ENCODE measurements at regions of chr10 and their contacts with region 1.

Region 1: DNA sequence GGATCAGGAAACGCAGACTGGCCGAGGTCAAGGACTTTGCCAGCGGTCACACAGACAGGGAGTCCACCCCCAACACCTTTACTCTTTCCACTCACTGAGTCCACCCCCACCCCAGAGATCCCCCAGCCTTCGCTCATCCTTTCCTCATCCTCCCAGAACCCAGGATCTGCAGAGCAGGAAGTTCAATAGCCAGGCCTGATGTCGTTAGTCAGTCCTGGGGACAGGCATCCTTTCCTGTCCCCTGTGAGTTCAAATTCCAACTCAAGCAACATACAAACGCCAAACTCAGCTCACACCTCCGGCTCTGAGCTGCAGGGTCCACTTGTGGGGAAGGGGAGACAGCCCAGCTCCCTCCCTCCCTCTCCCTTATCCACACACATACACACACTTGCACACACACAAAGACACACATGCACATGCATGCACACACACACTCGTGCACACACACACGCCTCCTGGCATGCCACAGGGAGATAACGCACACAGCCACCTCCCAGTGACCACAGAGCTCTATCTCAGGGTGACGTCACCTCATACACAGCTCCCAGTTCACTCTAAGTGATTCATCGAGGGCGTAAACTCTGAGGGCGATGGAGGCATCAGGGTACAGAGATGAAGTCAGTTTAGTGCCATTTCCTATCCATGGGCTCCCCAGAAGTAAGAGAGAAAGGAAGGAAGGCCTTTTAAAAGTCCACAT is 23.9 kb downstream of the CALML3 start:
- DNase-seq: peak; percentile 99
- ATAC-seq: peak; percentile 76
- H3K4me3 ChIP-seq: no peak overlapping the region
- H3K27ac ChIP-seq: peak overlapping the region; percentile 82
- H3K4me1 ChIP-seq: peaks cover 52% of the 10 kb centered on the region
- H3K27me3 ChIP-seq: no peaks in the 10 kb centered on the region
- CTCF ChIP-seq: no peak
- POLR2A ChIP-seq: no peak; the same call in 1 of the 2 replicates
- RAD21 ChIP-seq: no peak

Region 2: DNA sequence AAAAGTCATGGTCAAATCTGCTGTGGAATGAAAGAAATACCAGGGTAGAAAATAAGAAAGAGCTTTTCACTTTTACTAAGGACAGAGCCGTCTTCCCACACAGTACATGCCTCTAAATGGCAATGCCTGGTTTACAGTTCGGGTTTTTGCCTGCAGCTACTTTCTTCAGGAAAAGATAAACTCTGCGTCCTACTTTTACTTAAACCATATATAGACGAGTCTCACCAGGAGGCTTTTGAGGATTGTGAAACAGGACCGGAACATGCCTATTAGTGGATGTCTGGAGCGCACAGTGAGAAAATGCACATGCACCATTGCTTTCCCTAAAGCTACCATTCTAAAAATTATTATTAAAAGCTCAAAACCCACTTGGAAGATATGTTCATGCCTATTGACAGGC is 1834.1 kb before region 1 on chr10:
- CTCF ChIA-PET with region 1: no interaction called
- POLR2A ChIA-PET with region 1: no interaction called
- dilution Hi-C with region 1: no loop called
- in situ Hi-C with region 1: no loop called
- intact Hi-C with region 1: no loop called
- DNase-seq: no peak
- ATAC-seq: no peak; the same call in 1 of the 2 replicates
- H3K4me3 ChIP-seq: no peak overlapping the region
- H3K27ac ChIP-seq: no peak overlapping the region
- H3K4me1 ChIP-seq: no peaks in the 10 kb centered on the region
- H3K27me3 ChIP-seq: no peaks in the 10 kb centered on the region
- CTCF ChIP-seq: no peak
- POLR2A ChIP-seq: no peak
- RAD21 ChIP-seq: no peak

Region 3: GRCh38 chr10:5434017-5434753 is 114.5 kb before region 1 on chr10:
- CTCF ChIA-PET with region 1: interaction called, 13 read pairs
- POLR2A ChIA-PET with region 1: no interaction called
- dilution Hi-C with region 1: no loop called
- in situ Hi-C with region 1: no loop called
- intact Hi-C with region 1: no loop called
- DNase-seq: peak; percentile 81
- ATAC-seq: peak; percentile 89
- H3K4me3 ChIP-seq: no peak overlapping the region
- H3K27ac ChIP-seq: peak overlapping the region; percentile 74; the same call in 1 of the 2 replicates
- H3K4me1 ChIP-seq: peaks cover 7% of the 10 kb centered on the region
- H3K27me3 ChIP-seq: no peaks in the 10 kb centered on the region
- CTCF ChIP-seq: peak; percentile 74
- POLR2A ChIP-seq: no peak
- RAD21 ChIP-seq: peak; percentile 66